ENCODE measurements at regions of chr6 and their contacts with region 1.

Region 1: GRCh38 chr6:36912586-36912985 is 26.8 kb downstream of the C6orf89 start:
- DNase-seq: peak; percentile 78
- H3K4me3 Mint-ChIP-seq: peak overlapping the region; percentile 64
- H3K27ac Mint-ChIP-seq: peak overlapping the region; percentile 93
- H3K4me1 Mint-ChIP-seq: peaks cover 67% of the 10 kb centered on the region
- H3K27me3 Mint-ChIP-seq: no peaks in the 10 kb centered on the region

Region 2: DNA sequence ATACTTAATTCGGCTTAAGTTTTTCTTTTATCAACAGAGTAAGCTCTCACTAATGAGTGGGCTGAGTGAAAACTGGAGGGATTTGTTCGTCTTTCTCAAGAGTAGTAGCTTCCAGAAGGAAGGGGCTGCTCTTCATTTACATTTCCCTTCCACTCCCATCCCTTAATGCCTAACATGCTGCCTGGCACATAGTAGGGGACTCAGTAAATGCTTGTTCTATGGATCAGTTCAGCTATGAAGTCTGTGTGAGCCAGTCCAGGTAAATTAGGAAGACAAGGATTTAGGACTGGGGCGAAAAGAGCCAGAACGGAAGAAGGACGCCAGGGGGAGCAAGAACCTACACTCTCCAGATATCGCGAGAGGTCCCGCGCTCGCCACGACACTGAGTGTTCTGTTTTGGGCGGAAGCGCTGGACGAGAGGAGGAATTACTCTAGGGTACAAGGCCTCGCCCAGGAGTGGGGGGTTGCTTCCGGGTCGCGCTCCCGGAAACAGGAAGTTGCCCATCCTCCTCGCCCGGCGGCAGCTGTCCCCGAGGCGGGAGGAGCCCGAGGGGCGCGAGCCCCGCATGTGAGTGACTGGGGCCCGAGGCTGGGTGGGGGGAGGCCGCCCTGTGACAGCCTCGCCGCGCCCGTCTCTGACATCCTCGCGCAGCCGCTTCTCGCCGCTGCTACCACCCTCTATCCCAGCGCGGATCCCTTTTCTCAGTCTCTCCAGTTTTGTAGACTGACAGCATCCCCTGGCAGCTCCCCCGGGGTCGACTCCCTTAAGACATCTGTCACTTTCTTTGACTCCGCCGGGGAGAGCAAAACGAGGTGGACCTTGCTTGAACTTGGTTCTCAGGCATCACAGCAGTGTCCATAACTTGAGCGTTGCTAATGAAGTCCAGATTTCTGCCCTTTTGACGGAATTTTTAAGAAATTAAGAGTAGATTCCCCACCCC is 26.9 kb before region 1 on chr6 and contains the start of gene C6orf89:
- CTCF ChIA-PET with region 1: interaction called, 12 read pairs
- DNase-seq: peak; percentile 99
- H3K4me3 Mint-ChIP-seq: peak within 1 kb of the TSS; percentile 90
- H3K27ac Mint-ChIP-seq: peak within 1 kb of the TSS; percentile 92
- H3K4me1 Mint-ChIP-seq: peaks cover 37% of the 10 kb centered on the region
- H3K27me3 Mint-ChIP-seq: no peaks in the 10 kb centered on the region

Region 3: GRCh38 chr6:36924131-36924530 is 11.5 kb after region 1 on chr6:
- CTCF ChIA-PET with region 1: interaction called, 14 read pairs
- DNase-seq: no peak
- H3K4me3 Mint-ChIP-seq: no peak overlapping the region
- H3K27ac Mint-ChIP-seq: peak overlapping the region; percentile 53
- H3K4me1 Mint-ChIP-seq: peaks cover 29% of the 10 kb centered on the region
- H3K27me3 Mint-ChIP-seq: no peaks in the 10 kb centered on the region

Region 4: GRCh38 chr6:36979347-36979742 is 66.8 kb after region 1 on chr6:
- CTCF ChIA-PET with region 1: interaction called, 11 read pairs
- DNase-seq: peak; percentile 72
- H3K4me3 Mint-ChIP-seq: no peak overlapping the region
- H3K27ac Mint-ChIP-seq: peak overlapping the region; percentile 74
- H3K4me1 Mint-ChIP-seq: peaks cover 32% of the 10 kb centered on the region
- H3K27me3 Mint-ChIP-seq: no peaks in the 10 kb centered on the region

Measured in activated naive CD4-positive, alpha-beta T cell treated with anti-CD3 and anti-CD28 coated beads, Interleukin-2, amount 10 ng/mL, durations not matched to agents 7 days and 5 days (primary cell).